Posterior cingulate gyrus (tissue), 11 donors: ENCODE measurements at regions of chr15 and their contacts with region 1.

Region 1: GRCh38 chr15:35444557-35445204 is 101.3 kb downstream of the DPH6 start:
- DNase-seq: no peak

Region 2: GRCh38 chr15:35078221-35078915 is 366.3 kb before region 1 on chr15:
- intact Hi-C with region 1: loop called (anchors 2 kb)
- DNase-seq: peak in 6 of 10 donors; percentile 25 to 91 (median 38)

Region 3: GRCh38 chr15:35533130-35534110 is 88.7 kb after region 1 on chr15:
- intact Hi-C with region 1: no loop called
- DNase-seq: no peak